ENCODE measurements at regions of chr1 and their contacts with region 1.

Region 1: GRCh38 chr1:154607609-154608396 is at the start of gene ADAR:
- DNase-seq: peak; percentile 75 to 98 (median 88)
- ATAC-seq: peak; percentile 76
- H3K4me3 ChIP-seq: peak within 1 kb of the TSS; percentile 88
- H3K4me3 Mint-ChIP-seq: peak within 1 kb of the TSS; percentile 95
- H3K27ac ChIP-seq: peak within 1 kb of the TSS; percentile 88 to 95
- H3K27ac Mint-ChIP-seq: peak within 1 kb of the TSS; percentile 93
- H3K4me1 ChIP-seq: peaks cover 53% of the 10 kb centered on the region
- H3K4me1 Mint-ChIP-seq: peaks cover 86% of the 10 kb centered on the region
- H3K27me3 ChIP-seq: no peaks in the 10 kb centered on the region
- H3K27me3 Mint-ChIP-seq: no peaks in the 10 kb centered on the region
- CTCF ChIP-seq: no peak
- total RNA-seq, gene ADAR: 206 to 210 TPM

Region 2: GRCh38 chr1:154520333-154520732 is 87.5 kb before region 1 on chr1:
- CTCF ChIA-PET with region 1: no interaction called
- POLR2A ChIA-PET with region 1: no interaction called
- intact Hi-C with region 1: no loop called
- DNase-seq: no peak
- ATAC-seq: no peak
- H3K4me3 ChIP-seq: no peak overlapping the region
- H3K4me3 Mint-ChIP-seq: no peak overlapping the region
- H3K27ac ChIP-seq: no peak overlapping the region
- H3K27ac Mint-ChIP-seq: no peak overlapping the region
- H3K4me1 ChIP-seq: no peaks in the 10 kb centered on the region
- H3K4me1 Mint-ChIP-seq: no peaks in the 10 kb centered on the region
- H3K27me3 ChIP-seq: peaks cover 0 to 5% of the 10 kb centered on the region in 2 experiments
- H3K27me3 Mint-ChIP-seq: peaks cover 13% of the 10 kb centered on the region
- CTCF ChIP-seq: no peak

Region 3: DNA sequence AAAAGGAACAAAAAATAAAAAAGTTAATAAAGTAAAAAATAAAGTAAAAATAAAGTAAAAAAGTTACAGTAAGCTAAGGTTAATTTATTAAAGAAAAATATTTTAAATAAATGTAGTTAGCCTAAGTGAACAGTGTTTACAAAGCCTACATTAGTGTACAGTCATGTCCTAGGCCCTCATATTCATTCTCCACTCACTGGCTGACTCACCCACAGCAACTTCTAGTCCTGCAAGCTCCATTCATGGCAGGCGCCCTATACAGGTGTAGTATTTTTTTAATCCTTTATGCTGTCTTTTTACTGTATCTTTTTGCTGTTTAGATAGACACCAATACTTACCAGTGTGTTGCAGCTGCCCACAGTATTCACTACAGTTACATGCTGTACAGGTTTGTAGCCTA is 12.2 kb before region 1 on chr1:
- CTCF ChIA-PET with region 1: interaction called, 3 read pairs
- POLR2A ChIA-PET with region 1: interaction called, 12 read pairs
- intact Hi-C with region 1: no loop called
- DNase-seq: no peak
- ATAC-seq: no peak
- H3K4me3 ChIP-seq: no peak overlapping the region
- H3K4me3 Mint-ChIP-seq: no peak overlapping the region
- H3K27ac ChIP-seq: no peak overlapping the region
- H3K27ac Mint-ChIP-seq: no peak overlapping the region
- H3K4me1 ChIP-seq: peaks cover 11% of the 10 kb centered on the region
- H3K4me1 Mint-ChIP-seq: peaks cover 22% of the 10 kb centered on the region
- H3K27me3 ChIP-seq: no peaks in the 10 kb centered on the region
- H3K27me3 Mint-ChIP-seq: no peaks in the 10 kb centered on the region
- CTCF ChIP-seq: no peak

Region 4: GRCh38 chr1:154627257-154628120 is 19.7 kb after region 1 on chr1:
- CTCF ChIA-PET with region 1: interaction called, 7 read pairs
- POLR2A ChIA-PET with region 1: interaction called, 53 read pairs
- intact Hi-C with region 1: loop called (anchors 1 kb)
- DNase-seq: peak; percentile 79 to 94 (median 91)
- ATAC-seq: peak; percentile 70
- H3K4me3 ChIP-seq: peak overlapping the region; percentile 94
- H3K4me3 Mint-ChIP-seq: peak overlapping the region; percentile 95
- H3K27ac ChIP-seq: peak overlapping the region; percentile 91 to 98
- H3K27ac Mint-ChIP-seq: peak overlapping the region; percentile 99
- H3K4me1 ChIP-seq: peaks cover 22% of the 10 kb centered on the region
- H3K4me1 Mint-ChIP-seq: peaks cover 45% of the 10 kb centered on the region
- H3K27me3 ChIP-seq: no peaks in the 10 kb centered on the region
- H3K27me3 Mint-ChIP-seq: peaks cover 7% of the 10 kb centered on the region
- CTCF ChIP-seq: no peak

Region 5: GRCh38 chr1:155193275-155193990 is 585.6 kb after region 1 on chr1:
- CTCF ChIA-PET with region 1: no interaction called
- POLR2A ChIA-PET with region 1: no interaction called
- intact Hi-C with region 1: loop called in 1 of 2 experiments (anchors 5 kb)
- DNase-seq: peak; percentile 31 to 81 (median 62)
- ATAC-seq: peak; percentile 27
- H3K4me3 ChIP-seq: peak overlapping the region; percentile 62
- H3K4me3 Mint-ChIP-seq: peak overlapping the region; percentile 96
- H3K27ac ChIP-seq: peak overlapping the region; percentile 21 to 89
- H3K27ac Mint-ChIP-seq: peak overlapping the region; percentile 96
- H3K4me1 ChIP-seq: peaks cover 38% of the 10 kb centered on the region
- H3K4me1 Mint-ChIP-seq: peaks cover 27% of the 10 kb centered on the region
- H3K27me3 ChIP-seq: no peaks in the 10 kb centered on the region
- H3K27me3 Mint-ChIP-seq: no peaks in the 10 kb centered on the region
- CTCF ChIP-seq: peak; percentile 97

Measured in CD4-positive, alpha-beta T cell (primary cell).